ENCODE measurements at regions of chr11 and their contacts with region 1.

Region 1: GRCh38 chr11:86193297-86194095 is 51.1 kb upstream of the EED start:
- DNase-seq: peak; percentile 81 to 86 (median 81)
- ATAC-seq: peak; percentile 98 to 99
- H3K4me3 ChIP-seq: peak overlapping the region; percentile 17
- H3K27ac ChIP-seq: no peak overlapping the region
- H3K4me1 ChIP-seq: no peaks in the 10 kb centered on the region
- H3K27me3 ChIP-seq: no peaks in the 10 kb centered on the region

Region 2: DNA sequence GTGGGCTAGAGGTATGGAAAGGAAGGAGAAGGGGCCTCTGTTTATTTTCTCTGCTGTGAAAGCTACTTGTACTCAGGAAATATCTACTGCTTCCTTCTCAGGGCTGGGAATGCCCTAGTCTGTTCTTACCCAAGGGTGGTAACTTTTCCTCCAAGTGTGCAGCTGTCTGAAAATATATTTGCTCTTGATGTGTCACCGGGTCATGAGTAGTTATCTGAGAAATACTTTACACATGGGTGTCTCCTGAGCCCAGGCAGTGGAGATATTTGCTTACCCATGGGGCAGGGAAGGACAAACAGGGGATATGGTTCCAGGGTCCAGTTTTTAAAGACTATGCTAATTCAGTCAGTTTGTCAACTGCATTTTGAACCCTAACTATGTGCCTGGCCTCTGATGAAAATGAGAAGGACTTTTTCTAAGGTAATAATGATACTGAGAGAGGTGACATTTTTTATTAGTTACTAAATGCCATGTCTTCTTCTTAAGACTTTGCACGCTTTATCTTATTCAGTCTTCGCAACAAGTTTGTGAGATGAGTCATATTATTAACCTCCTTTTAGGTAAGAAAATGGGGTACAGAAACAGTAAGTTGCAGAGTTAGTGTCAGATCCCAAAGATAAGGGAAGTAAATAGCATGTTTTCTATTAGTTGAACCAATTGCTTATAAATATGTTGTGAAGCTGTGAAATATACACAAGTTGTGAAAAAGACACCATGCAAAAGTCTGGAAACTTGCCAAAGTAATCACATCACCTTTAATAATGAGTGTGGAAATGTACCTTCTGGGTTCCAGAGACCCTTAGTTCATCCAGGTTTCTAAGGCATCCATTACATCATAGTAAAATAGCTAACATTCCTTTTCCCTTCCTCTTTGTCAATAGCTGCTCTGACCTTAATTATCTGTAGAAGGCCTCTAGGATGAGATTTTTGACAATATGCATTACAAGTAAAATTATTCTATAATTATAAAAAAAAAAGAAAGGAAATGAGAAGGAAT is 405.4 kb before region 1 on chr11:
- intact Hi-C with region 1: no loop called
- DNase-seq: no peak
- ATAC-seq: no peak
- H3K4me3 ChIP-seq: no peak overlapping the region
- H3K27ac ChIP-seq: no peak overlapping the region
- H3K4me1 ChIP-seq: no peaks in the 10 kb centered on the region
- H3K27me3 ChIP-seq: no peaks in the 10 kb centered on the region

Region 3: DNA sequence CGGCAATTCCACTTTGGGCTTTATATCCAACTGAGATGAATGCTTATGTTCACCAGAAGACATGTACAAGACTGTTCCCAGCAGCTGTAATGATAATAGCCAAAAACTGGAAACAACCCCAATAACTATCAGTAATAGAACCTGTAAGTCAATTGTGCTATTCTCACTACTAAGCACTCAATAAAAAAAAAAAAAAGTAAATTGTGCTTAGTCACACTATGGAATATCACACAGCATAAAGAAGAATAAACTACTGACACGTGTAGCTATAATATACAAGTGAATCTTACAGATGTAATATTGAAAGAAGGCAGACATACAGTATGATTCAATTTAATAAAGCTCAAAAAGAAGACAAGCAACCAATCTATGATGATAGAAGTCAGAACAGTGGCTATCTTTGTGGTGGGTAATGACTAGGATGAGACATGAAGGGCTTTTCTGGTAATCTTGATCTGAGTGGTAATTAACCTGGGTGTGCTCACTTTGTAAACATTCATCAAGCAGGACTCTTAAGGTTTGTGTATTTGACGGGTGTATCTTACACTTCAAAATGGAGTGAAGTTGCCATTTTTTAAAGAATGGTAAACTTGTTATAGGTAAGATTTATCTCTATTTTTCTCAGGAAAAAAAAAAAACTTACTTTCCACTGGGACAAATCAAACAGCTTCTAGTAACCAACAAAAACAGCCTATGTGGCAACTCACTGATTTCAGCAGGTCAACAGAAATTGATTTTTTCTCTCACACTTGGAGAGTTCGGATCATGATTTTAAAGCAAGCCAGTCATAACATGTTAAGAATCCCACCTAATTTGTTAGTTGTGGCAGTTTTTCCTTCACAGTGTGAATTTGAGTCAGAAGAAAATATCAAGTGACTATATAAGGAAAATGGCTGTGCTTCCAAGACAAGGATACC is 254.1 kb before region 1 on chr11:
- intact Hi-C with region 1: no loop called
- DNase-seq: no peak
- ATAC-seq: no peak
- H3K4me3 ChIP-seq: no peak overlapping the region
- H3K27ac ChIP-seq: no peak overlapping the region
- H3K4me1 ChIP-seq: no peaks in the 10 kb centered on the region
- H3K27me3 ChIP-seq: no peaks in the 10 kb centered on the region

Region 4: GRCh38 chr11:86041975-86042378 is 151.5 kb before region 1 on chr11:
- intact Hi-C with region 1: loop called (anchors 2 to 5 kb)
- DNase-seq: no peak
- ATAC-seq: peak; percentile 77 to 84
- H3K4me3 ChIP-seq: peak overlapping the region; percentile 48
- H3K27ac ChIP-seq: no peak overlapping the region
- H3K4me1 ChIP-seq: peaks cover 5% of the 10 kb centered on the region
- H3K27me3 ChIP-seq: no peaks in the 10 kb centered on the region

Region 5: GRCh38 chr11:86068951-86069407 is 124.5 kb before region 1 on chr11 and contains the start of gene PICALM:
- intact Hi-C with region 1: loop called in 1 of 4 experiments (anchors 5 kb)
- DNase-seq: peak; percentile 99
- ATAC-seq: peak; percentile 95 to 97
- H3K4me3 ChIP-seq: peak within 1 kb of the TSS; percentile 83
- H3K27ac ChIP-seq: peak within 1 kb of the TSS; percentile 100
- H3K4me1 ChIP-seq: peaks cover 4% of the 10 kb centered on the region
- H3K27me3 ChIP-seq: no peaks in the 10 kb centered on the region
- total RNA-seq, gene PICALM: 170 to 298 (median 182) TPM

Region 6: DNA sequence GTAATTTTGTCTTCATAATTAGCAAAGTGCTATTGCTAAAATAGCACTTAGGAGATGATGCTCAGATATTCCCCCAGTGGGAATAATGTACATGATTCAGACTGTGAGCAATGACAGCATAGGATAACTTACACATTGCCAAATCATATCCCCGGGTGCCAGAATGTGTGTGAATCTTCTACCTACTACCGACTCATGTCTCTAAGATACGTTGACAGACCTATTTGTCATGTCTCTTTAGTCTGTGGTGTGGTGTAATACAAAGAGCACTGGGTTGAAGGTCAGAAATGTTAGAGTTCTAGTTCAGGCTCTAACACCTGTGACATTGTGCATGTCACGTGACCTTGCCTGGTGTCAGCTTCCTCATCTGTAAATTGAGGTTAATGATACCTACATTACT is 93.6 kb before region 1 on chr11:
- intact Hi-C with region 1: no loop called
- DNase-seq: no peak
- ATAC-seq: no peak
- H3K4me3 ChIP-seq: no peak overlapping the region
- H3K27ac ChIP-seq: no peak overlapping the region
- H3K4me1 ChIP-seq: no peaks in the 10 kb centered on the region
- H3K27me3 ChIP-seq: no peaks in the 10 kb centered on the region

Region 7: DNA sequence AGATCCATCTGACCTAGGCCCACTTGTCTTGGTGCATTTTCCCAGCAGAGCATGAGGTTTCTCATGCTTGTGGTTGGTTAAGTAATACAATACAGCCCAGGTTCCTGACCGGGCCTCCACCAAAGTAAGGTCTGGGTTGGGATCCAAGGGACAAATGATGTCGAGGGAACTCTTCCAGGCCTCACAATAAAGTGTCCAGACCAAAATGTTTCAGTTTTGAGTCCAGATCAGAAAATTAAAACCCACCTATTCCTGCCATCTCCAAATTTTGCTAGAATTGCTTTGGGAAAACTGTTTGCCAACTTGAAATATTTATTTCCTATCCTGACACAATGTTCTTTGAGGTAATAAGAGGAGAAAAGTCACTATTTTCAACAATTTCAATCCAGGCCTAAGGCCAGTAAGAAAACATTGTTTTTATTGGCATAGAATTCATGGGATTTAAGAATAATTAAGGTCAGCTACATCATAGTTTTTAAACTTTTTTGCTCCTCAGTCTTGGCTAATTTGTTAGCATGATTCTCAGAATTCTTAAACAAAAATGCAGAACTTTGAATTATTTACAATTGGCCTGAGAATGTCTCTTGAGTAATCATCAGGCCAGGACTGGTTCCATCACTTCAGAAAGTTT is 427.5 kb after region 1 on chr11:
- intact Hi-C with region 1: no loop called
- DNase-seq: no peak
- ATAC-seq: peak; percentile 69 to 71
- H3K4me3 ChIP-seq: no peak overlapping the region
- H3K27ac ChIP-seq: peak overlapping the region; percentile 52
- H3K4me1 ChIP-seq: peaks cover 5% of the 10 kb centered on the region
- H3K27me3 ChIP-seq: no peaks in the 10 kb centered on the region